Sciatic nerve (tissue), 2 donors: ENCODE measurements at regions of chr5 and their contacts with region 1.

Region 1: GRCh38 chr5:151115274-151115905 is 34.6 kb upstream of the TNIP1 start:
- DNase-seq: peak; percentile 91
- ATAC-seq: peak; percentile 83

Region 2: DNA sequence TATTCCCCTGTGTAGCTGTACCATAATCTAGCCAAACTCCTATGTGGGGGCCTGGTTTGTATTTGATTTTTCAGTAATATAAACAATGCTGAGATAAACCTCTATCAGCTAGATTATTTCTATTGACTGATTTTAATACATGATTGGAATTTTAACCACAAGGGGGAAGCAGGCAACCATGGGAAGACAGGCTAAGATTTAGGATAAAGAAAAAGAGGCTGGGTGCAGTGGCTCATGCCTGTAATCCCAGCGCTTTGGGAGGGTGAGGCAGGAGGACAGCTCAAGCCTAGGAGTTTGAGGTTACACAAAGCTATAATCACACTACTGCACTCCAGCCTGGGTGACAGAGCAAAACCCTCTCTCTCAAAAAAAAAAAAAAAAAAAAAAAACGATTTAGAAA is 113.1 kb before region 1 on chr5:
- intact Hi-C with region 1: loop called (anchors 5 kb)
- DNase-seq: no peak
- ATAC-seq: no peak